Activated T-helper 1 cell treated with anti-CD3 and anti-CD28 coated beads, Interleukin-12 subunit alpha, Interleukin-12 subunit beta, Interleukin-2, Interleukin-4 antibody, amounts not matched to agents 30 ng/mL and 10 ng/mL and 1 ng/mL, durations not matched to agents 14 hours and 24 hours and 36 hours (primary cell): ENCODE measurements at regions of chr15 and their contacts with region 1.

Region 1: DNA sequence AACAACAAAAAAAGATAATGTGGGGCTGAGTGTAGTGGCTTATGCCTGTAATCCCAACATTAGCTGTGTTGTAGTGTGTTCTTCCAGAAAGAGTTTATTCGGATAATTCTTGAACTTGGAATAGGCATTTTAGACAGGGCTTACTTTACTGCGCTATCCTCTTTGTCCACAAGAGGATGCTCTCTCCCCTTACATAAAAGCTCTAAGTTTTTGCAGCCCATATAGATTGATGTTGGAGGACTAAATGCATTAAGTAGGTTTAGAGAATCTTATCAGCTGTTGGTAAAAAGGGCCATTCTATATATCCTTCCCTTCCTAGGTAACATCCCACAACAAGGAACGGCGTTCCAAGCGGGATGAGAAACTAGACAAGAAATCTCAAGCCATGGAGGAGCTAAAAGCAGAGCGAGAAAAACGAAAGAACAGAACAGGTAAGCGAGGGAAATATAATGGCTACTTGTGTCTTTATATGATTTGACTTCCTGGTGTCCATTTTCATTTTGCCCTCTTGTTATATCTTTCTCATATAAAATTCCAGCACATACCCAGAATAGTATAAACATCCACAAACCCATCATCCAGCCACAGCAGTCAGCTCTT is 27.8 kb upstream of the ITPKA start:
- DNase-seq: no peak
- H3K4me3 Mint-ChIP-seq: no peak overlapping the region
- H3K27ac Mint-ChIP-seq: no peak overlapping the region
- H3K4me1 Mint-ChIP-seq: peaks cover 15% of the 10 kb centered on the region
- H3K27me3 Mint-ChIP-seq: no peaks in the 10 kb centered on the region

Region 2: GRCh38 chr15:41483115-41483514 is 17.2 kb after region 1 on chr15:
- intact Hi-C with region 1: loop called (anchors 2 kb)
- DNase-seq: peak; percentile 54
- H3K4me3 Mint-ChIP-seq: peak overlapping the region; percentile 30
- H3K27ac Mint-ChIP-seq: peak overlapping the region; percentile 48
- H3K4me1 Mint-ChIP-seq: peaks cover 58% of the 10 kb centered on the region
- H3K27me3 Mint-ChIP-seq: peaks cover 2% of the 10 kb centered on the region

Region 3: DNA sequence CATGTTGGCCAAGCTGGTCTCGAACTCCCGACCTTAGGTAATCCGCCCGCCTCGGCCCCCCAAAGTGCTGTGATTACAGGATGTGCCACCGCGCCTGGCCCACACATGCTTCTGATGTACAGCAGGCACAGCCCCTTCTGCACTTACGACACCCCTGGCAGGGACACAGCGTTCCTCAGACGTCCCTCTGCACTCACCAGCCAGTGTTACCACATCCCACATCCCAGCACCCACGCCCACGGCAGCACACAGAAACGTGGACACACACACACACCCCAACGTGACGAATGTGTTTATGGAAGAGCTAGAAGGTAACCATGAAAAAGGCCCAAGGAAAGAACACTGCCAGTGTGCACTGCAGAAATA is 78.7 kb after region 1 on chr15:
- intact Hi-C with region 1: loop called (anchors 5 kb)
- DNase-seq: no peak
- H3K4me3 Mint-ChIP-seq: peak overlapping the region; percentile 97
- H3K27ac Mint-ChIP-seq: no peak overlapping the region
- H3K4me1 Mint-ChIP-seq: peaks cover 17% of the 10 kb centered on the region
- H3K27me3 Mint-ChIP-seq: no peaks in the 10 kb centered on the region

Region 4: DNA sequence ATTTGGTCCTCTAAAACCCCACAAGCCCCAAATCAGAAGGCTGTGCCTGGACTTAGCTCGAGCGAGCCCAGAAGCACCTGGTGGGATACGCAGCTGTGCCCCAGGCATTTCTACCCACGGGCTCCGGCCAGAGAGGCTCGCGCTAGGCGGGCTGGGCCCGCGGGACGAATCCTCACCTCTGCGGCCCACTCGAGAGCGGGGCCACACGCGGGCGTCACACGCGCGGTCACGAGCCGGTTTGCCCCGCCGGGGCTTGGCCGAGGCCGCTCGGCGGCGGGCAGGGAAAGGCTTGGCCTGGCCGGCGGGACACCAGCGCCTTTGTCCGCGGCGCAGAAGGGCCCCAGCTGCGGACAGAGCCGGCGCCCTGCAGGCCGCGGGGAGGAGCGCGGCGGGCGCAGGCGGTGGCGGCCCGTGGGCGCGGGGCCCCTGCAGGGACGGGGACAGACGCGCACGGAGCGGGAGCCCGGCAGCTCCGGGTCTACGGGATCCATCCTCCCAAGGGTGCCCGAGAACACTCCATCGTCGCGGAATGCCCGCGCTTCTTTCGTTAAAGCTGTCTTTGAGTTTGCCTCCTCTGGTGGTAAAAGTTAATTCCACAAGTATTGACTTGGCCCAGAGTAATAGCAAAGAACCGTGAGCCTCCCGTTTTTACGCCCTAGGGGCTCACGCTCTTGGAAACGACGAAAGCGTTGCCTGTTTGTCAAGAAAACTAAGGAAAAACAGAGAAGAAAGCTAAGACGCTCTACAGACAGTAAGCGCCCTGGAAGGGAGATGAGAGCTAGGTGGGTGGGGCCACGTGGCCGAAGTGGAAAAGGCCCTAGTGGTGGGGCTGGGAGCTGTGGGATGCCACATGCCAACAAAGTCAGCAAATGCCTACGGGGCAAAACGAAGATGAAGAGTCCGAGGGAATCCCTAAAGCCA is 119.5 kb after region 1 on chr15:
- intact Hi-C with region 1: loop called (anchors 2 kb)
- DNase-seq: peak; percentile 8
- H3K4me3 Mint-ChIP-seq: peak overlapping the region; percentile 72
- H3K27ac Mint-ChIP-seq: no peak overlapping the region
- H3K4me1 Mint-ChIP-seq: peaks cover 6% of the 10 kb centered on the region
- H3K27me3 Mint-ChIP-seq: peaks cover 67% of the 10 kb centered on the region

Region 5: GRCh38 chr15:41695750-41696426 is 230.0 kb after region 1 on chr15:
- intact Hi-C with region 1: loop called (anchors 10 kb)
- DNase-seq: peak; percentile 34
- H3K4me3 Mint-ChIP-seq: peak overlapping the region; percentile 28
- H3K27ac Mint-ChIP-seq: peak overlapping the region; percentile 81
- H3K4me1 Mint-ChIP-seq: peaks cover 38% of the 10 kb centered on the region
- H3K27me3 Mint-ChIP-seq: no peaks in the 10 kb centered on the region

Region 6: DNA sequence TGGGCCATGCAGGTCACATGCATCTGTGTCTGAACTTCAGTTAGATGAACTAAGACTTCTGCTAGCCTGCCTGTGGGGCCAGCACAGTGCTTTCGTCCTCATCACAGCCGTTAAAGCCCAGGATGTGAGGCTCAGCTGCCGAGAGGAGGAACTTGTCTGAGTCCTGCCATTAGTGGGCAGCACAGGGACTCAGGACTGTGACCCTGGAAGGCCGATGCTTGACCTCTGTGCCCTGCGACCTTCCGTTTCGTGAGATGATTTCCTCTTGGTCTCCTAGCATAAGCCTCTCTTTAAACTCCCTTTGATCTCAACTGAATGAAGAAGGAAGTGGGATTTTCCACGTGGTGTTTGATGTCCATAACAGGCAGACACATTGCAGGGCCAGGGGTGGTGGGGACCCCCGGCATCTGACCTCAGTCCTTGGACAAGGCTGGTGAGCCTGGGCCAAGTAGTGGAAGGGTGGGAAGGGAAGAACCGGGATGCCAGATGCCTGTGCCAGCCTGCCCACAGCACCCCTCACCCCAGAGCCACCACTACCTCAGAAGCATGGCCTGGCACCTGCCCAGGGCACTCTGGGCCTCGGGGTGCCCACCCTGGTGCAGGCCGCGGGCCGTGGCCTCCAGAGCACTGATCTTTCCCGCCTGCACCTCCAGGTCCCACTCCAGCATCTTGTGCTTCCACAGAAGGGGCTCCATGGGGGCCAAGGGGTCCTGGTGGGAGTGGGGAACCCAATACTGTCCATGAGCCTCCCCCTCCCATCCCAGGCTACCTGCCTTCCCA is 394.3 kb after region 1 on chr15:
- intact Hi-C with region 1: no loop called
- DNase-seq: no peak
- H3K4me3 Mint-ChIP-seq: no peak overlapping the region
- H3K27ac Mint-ChIP-seq: no peak overlapping the region
- H3K4me1 Mint-ChIP-seq: peaks cover 5% of the 10 kb centered on the region
- H3K27me3 Mint-ChIP-seq: no peaks in the 10 kb centered on the region